ENCODE measurements at regions of chr13 and their contacts with region 1.

Region 1: GRCh38 chr13:94674609-94675348 is 37.6 kb downstream of the SOX21 start:
- DNase-seq: peak in 8 of 9 experiments; percentile 17 to 60 (median 50)
- ATAC-seq: peak; percentile 52
- H3K4me3 ChIP-seq: no peak overlapping the region
- H3K4me3 Mint-ChIP-seq: no peak overlapping the region
- H3K27ac ChIP-seq: no peak overlapping the region
- H3K27ac Mint-ChIP-seq: no peak overlapping the region
- H3K4me1 ChIP-seq: no peaks in the 10 kb centered on the region
- H3K4me1 Mint-ChIP-seq: no peaks in the 10 kb centered on the region
- H3K27me3 ChIP-seq: no peaks in the 10 kb centered on the region
- H3K27me3 Mint-ChIP-seq: peaks cover 22% of the 10 kb centered on the region
- CTCF ChIP-seq: peak; percentile 87

Region 2: DNA sequence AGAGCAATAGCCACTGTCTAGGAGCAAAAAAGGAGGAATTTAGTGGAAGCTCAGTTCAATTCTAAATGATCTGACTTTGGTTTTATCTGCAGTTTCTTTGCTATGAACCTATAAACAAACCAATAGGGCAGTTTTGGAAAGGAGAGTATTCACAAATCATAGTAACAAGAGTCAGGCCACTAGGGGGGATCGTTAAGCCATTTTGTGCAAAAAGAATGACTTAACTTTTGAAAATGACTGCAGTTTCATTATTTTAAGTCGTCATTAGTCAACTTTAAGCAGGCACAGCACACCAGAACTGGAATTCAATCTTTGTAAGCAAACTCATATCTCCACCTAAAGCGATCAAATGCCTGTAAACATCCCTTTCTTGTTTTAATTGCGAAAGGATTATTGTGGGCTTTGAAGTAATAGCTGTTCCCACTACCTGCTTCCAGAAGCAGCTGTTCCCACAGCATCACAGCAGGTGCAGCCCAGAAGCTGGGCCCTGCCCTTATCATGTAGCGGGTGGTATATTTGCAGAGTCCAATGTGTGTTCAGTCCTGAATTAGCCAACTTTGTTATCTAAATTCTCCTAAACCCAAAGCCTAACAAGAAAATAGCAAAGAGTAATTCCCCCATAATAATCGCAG is 14.0 kb before region 1 on chr13:
- CTCF ChIA-PET with region 1: interaction called, 15 read pairs
- POLR2A ChIA-PET with region 1: no interaction called
- intact Hi-C with region 1: no loop called
- DNase-seq: no peak
- ATAC-seq: no peak
- H3K4me3 ChIP-seq: no peak overlapping the region
- H3K4me3 Mint-ChIP-seq: no peak overlapping the region
- H3K27ac ChIP-seq: no peak overlapping the region
- H3K27ac Mint-ChIP-seq: no peak overlapping the region
- H3K4me1 ChIP-seq: no peaks in the 10 kb centered on the region
- H3K4me1 Mint-ChIP-seq: peaks cover 8% of the 10 kb centered on the region
- H3K27me3 ChIP-seq: no peaks in the 10 kb centered on the region
- H3K27me3 Mint-ChIP-seq: peaks cover 25% of the 10 kb centered on the region
- CTCF ChIP-seq: no peak

Region 3: DNA sequence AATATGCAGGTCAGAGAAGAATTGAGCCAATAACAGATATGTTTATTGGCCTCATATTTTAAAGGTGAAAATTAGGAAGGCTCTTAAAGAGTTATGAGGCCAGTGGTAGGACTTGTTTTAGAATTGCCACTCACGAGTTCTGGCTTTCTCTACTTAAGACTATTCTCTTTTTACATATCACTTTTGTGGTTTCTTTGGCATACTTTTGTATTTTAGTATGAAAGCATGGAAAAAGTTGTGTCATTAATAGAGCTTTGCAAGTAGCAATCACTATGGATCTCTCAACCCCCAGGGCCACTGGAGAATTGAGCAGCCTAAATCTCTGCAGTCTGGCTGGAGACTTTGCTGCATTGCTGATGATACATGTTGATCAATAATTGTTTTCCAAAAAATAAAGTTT is 102.2 kb after region 1 on chr13:
- CTCF ChIA-PET with region 1: no interaction called
- POLR2A ChIA-PET with region 1: no interaction called
- intact Hi-C with region 1: no loop called
- DNase-seq: no peak
- ATAC-seq: no peak
- H3K4me3 ChIP-seq: no peak overlapping the region
- H3K4me3 Mint-ChIP-seq: no peak overlapping the region
- H3K27ac ChIP-seq: no peak overlapping the region
- H3K27ac Mint-ChIP-seq: no peak overlapping the region
- H3K4me1 ChIP-seq: no peaks in the 10 kb centered on the region
- H3K4me1 Mint-ChIP-seq: no peaks in the 10 kb centered on the region
- H3K27me3 ChIP-seq: no peaks in the 10 kb centered on the region
- H3K27me3 Mint-ChIP-seq: peaks cover 6% of the 10 kb centered on the region
- CTCF ChIP-seq: no peak